Activated B cell treated with CpG ODN at 0.5 μM for 24 hours (primary cell): ENCODE measurements at regions of chr15 and their contacts with region 1.

Region 1: DNA sequence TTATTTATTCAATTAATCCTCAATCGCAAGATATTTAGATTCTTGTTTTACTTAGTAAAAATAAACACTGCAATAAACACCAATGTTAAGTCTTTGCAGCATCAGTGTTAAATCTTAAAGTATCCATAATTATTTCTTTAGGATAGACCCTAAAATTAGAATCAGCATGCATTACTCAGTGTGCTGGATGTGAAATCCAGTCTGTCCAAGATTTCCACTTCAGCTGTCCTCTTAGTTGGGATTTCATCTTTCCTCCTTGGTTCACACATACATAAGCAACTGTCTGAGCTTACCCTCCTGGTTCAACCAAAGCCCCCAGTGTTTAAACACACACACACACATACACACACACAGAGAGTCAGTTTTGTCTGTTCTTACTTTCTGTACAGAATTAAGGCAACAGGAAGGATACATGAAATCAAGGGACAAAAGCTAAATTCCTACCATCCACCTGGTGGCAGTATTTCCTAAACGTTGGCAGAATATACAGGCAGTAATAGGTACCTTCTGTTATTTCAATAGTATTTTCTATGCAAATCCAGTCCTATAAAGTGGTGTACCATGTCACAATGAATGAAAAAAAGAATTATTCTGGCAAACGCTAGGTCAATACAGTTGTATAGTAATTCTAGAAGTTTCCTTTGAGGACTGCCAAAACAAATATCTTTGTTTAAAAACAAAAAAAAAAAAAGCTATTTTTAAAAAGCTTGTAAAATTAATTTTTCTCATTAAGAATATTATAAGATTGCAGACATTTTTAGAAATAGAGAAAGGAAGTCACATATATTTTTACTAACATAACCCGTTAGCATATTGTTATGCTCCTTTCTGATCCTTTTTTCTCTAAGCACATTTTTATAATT is 27.3 kb upstream of the DMXL2 start:
- DNase-seq: no peak
- ATAC-seq: peak; percentile 84
- H3K4me3 Mint-ChIP-seq: no peak overlapping the region
- H3K27ac Mint-ChIP-seq: no peak overlapping the region
- H3K4me1 Mint-ChIP-seq: no peaks in the 10 kb centered on the region
- H3K27me3 Mint-ChIP-seq: no peaks in the 10 kb centered on the region
- CTCF ChIP-seq: no peak

Region 2: GRCh38 chr15:51600114-51600513 is 49.8 kb before region 1 on chr15:
- CTCF ChIA-PET with region 1: no interaction called
- POLR2A ChIA-PET with region 1: no interaction called
- intact Hi-C with region 1: no loop called
- DNase-seq: no peak
- ATAC-seq: peak; percentile 82
- H3K4me3 Mint-ChIP-seq: no peak overlapping the region
- H3K27ac Mint-ChIP-seq: no peak overlapping the region
- H3K4me1 Mint-ChIP-seq: peaks cover 7% of the 10 kb centered on the region
- H3K27me3 Mint-ChIP-seq: peaks cover 4% of the 10 kb centered on the region
- CTCF ChIP-seq: no peak

Region 3: DNA sequence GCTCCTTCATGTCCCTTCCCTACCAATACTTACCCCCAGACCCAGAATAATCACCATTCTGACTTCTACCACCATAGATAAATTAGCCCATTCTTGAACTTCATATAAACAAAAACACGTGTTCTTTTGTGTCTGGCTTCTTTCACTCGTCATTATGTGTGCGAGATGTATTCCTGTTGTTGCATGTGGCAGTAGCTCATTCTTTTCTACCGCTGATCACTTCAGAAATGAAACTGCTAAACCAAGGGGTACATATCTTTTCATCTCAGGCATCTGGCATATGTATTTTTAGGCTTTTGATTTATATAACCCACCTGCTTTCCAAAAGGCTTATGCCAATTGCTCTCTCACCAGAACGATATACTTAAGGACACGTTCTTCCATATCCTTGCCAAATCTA is 17.6 kb after region 1 on chr15:
- CTCF ChIA-PET with region 1: no interaction called
- POLR2A ChIA-PET with region 1: no interaction called
- intact Hi-C with region 1: no loop called
- DNase-seq: no peak
- ATAC-seq: no peak
- H3K4me3 Mint-ChIP-seq: no peak overlapping the region
- H3K27ac Mint-ChIP-seq: no peak overlapping the region
- H3K4me1 Mint-ChIP-seq: peaks cover 2% of the 10 kb centered on the region
- H3K27me3 Mint-ChIP-seq: peaks cover 20% of the 10 kb centered on the region
- CTCF ChIP-seq: no peak

Region 4: DNA sequence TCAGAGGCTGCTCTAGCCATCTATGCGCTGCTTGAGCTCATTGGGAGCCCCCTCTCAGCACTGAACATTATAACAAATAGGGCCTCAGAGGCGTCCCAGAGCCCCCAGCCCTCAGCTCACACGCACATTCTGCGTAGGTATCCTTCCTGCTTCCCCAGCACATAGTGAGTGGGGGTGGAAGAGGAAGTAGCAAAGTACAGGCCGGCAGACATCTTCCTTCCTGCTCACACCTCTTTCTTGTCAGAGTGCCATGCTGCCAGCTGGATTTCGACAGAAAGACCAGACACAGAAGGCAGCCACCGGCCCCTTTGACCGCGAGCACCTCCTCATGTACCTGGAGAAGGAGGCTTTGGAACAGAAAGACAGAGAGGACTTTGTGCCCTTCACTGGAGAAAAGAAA is 118.1 kb after region 1 on chr15:
- CTCF ChIA-PET with region 1: interaction called, 348 read pairs
- POLR2A ChIA-PET with region 1: no interaction called
- intact Hi-C with region 1: no loop called
- DNase-seq: no peak
- ATAC-seq: peak; percentile 58
- H3K4me3 Mint-ChIP-seq: no peak overlapping the region
- H3K27ac Mint-ChIP-seq: peak overlapping the region; percentile 77
- H3K4me1 Mint-ChIP-seq: peaks cover 10% of the 10 kb centered on the region
- H3K27me3 Mint-ChIP-seq: no peaks in the 10 kb centered on the region
- CTCF ChIP-seq: no peak